A549 (cell line): ENCODE measurements at regions of chr17 and their contacts with region 1.

Region 1: DNA sequence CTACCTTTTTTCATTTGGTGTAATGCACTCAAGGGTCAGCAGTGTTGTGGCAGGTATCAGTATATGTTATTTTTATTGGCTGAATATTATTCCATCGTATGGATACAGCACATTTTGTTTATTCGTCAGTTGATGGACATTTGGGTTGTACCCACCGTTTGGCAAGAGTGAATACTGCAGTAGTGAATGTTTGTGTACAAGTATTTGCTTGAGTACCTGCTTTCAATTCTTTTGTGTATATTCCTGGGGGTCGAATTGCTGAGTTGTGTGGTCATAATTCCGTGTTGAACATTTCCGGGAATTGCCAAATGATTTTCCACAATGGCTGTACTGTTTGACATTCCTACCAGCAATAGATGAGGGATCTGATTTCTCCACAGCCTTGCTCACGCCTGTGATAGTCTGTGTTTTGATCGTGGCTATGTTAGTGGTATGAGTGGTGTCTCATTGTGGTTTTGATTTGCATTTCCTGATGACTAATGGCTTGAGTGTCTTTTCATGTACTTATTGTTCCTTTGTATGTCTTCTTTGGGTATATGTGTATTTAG is 108.4 kb downstream of the OR1D5 start:
- DNase-seq: peak; percentile 90 to 98
- ATAC-seq: peak; percentile 86
- H3K4me3 ChIP-seq: no peak overlapping the region
- H3K27ac ChIP-seq: peak overlapping the region; percentile 83 to 91
- H3K4me1 ChIP-seq: peaks cover 73% of the 10 kb centered on the region
- CTCF ChIP-seq: no peak
- EP300 ChIP-seq: peak; percentile 96; a peak in 4 of 5 replicates
- POLR2A ChIP-seq: no peak
- RAD21 ChIP-seq: peak in 1 of 2 experiments; percentile 60; a peak in 3 of 5 replicates

Region 2: GRCh38 chr17:2853111-2853721 is 101.8 kb before region 1 on chr17:
- CTCF ChIA-PET with region 1: interaction called, 60 read pairs
- POLR2A ChIA-PET with region 1: interaction called, 6 read pairs
- DNase-seq: peak; percentile 63 to 73
- ATAC-seq: peak; percentile 57 to 72
- H3K4me3 ChIP-seq: peak overlapping the region; percentile 72
- H3K27ac ChIP-seq: peak overlapping the region; percentile 87 to 92
- H3K4me1 ChIP-seq: peaks cover 23% of the 10 kb centered on the region
- CTCF ChIP-seq: no peak
- EP300 ChIP-seq: no peak
- POLR2A ChIP-seq: no peak
- RAD21 ChIP-seq: 0 out of 5 replicates have a peak, but pooled peaks of 1 of the 2 experiments have one; percentile 15

Region 3: DNA sequence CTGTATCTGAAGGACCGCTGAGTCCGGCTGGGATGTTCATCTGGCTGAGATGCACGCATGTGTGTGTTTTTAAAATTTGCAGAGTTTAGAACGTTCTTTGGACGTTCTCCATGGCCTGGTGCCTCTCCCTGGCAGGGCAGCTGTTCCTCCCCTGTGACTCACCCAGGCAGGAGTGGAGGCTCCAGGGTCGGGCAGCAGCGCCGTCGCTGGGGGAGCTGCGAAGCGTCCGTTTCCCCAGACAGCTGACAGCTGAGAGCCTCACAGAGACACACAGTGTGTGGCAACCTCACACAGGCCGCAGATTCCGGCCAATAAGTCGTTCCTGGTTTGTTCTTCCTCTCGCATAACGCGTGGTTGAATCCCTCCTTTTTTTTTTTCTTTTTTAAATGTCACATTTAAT is 27.9 kb after region 1 on chr17:
- CTCF ChIA-PET with region 1: interaction called, 13 read pairs
- POLR2A ChIA-PET with region 1: no interaction called
- DNase-seq: peak; percentile 77 to 89
- ATAC-seq: peak; percentile 98
- H3K4me3 ChIP-seq: no peak overlapping the region
- H3K27ac ChIP-seq: peak overlapping the region; percentile 54 to 63
- H3K4me1 ChIP-seq: peaks cover 12% of the 10 kb centered on the region
- CTCF ChIP-seq: peak; percentile 30; the same call in 2 of the 3 replicates
- EP300 ChIP-seq: no peak
- POLR2A ChIP-seq: no peak
- RAD21 ChIP-seq: peak; percentile 56 to 67

Region 4: GRCh38 chr17:3004133-3004801 is 49.3 kb after region 1 on chr17:
- CTCF ChIA-PET with region 1: interaction called, 22 read pairs
- POLR2A ChIA-PET with region 1: interaction called, 3 read pairs
- DNase-seq: peak; percentile 98
- ATAC-seq: peak; percentile 91 to 92
- H3K4me3 ChIP-seq: no peak overlapping the region
- H3K27ac ChIP-seq: peak overlapping the region; percentile 91
- H3K4me1 ChIP-seq: peaks cover 40% of the 10 kb centered on the region
- CTCF ChIP-seq: no peak
- EP300 ChIP-seq: peak; percentile 51 to 77; a peak in 3 of 5 replicates
- POLR2A ChIP-seq: no peak
- RAD21 ChIP-seq: peak; percentile 13 to 46; a peak in 4 of 5 replicates

Region 5: DNA sequence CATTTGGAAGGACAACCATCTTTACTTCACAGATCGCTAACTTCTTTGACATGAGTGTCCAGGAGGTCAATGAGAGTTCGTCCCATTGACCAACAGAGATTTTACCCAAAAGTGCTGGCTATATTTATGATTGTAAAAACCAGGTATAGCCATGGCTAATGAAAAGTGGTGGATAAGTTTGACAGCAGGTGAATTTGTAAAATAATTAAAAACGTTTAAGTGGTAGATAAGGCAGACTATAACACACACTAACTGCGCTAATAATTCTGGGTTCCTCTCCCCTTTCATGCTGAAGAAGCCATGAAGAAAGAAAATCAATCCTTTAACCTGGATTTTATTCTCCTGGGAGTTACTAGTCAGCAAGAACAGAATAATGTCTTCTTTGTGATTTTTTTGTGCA is 242.2 kb after region 1 on chr17 and contains the start of gene OR1A2:
- CTCF ChIA-PET with region 1: no interaction called
- POLR2A ChIA-PET with region 1: no interaction called
- DNase-seq: no peak
- ATAC-seq: no peak
- H3K4me3 ChIP-seq: no peak within 1 kb of the TSS
- H3K27ac ChIP-seq: no peak within 1 kb of the TSS
- H3K4me1 ChIP-seq: no peaks in the 10 kb centered on the region
- CTCF ChIP-seq: no peak
- EP300 ChIP-seq: no peak
- POLR2A ChIP-seq: no peak
- RAD21 ChIP-seq: no peak
- polyA plus RNA-seq, gene OR1A2: not detected in 2 replicates